H1 (cell line): ENCODE measurements at regions of chr17 and their contacts with region 1.

Region 1: GRCh38 chr17:66392783-66393437 is 90.5 kb downstream of the PRKCA start:
- DNase-seq: no peak
- H3K4me3 ChIP-seq: no peak overlapping the region
- H3K27ac ChIP-seq: no peak overlapping the region
- H3K4me1 ChIP-seq: no peaks in the 10 kb centered on the region; a peak in 1 of 7 replicates
- H3K27me3 ChIP-seq: no peaks in the 10 kb centered on the region
- CTCF ChIP-seq: no peak
- EP300 ChIP-seq: no peak
- POLR2A ChIP-seq: no peak
- RAD21 ChIP-seq: no peak

Region 2: DNA sequence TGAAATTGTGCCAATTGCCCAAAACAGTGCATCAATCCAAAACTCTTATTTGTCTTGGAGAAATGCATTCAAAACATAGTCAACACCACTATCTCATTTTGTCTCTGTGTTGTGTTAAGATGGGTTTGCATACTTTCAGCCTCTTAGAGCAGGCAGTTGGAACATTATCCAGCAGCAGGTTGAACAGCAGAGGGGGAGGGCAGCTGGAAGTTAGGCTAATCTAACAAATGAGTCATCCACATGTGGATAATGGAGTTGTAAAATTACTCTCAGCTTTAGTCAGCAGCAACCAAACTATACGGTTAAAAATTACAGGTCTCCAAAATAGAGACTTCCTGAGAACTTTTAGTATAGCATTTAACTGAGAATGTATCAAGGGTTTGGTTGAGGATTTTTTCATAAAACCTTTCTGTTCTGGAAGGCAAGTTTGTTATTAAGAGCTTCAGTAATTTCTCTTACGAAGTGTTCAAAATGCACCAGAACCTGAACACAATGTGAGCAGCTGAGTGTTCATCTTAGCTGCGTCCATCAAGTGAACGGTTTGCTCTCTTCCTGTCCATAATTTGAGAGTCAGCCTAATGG is 44.2 kb before region 1 on chr17:
- CTCF ChIA-PET with region 1: no interaction called
- POLR2A ChIA-PET with region 1: no interaction called
- DNase-seq: no peak
- H3K4me3 ChIP-seq: no peak overlapping the region
- H3K27ac ChIP-seq: no peak overlapping the region
- H3K4me1 ChIP-seq: peaks cover 0 to 9% (median 4%) of the 10 kb centered on the region in 4 experiments; a peak in 2 of 7 replicates
- H3K27me3 ChIP-seq: no peaks in the 10 kb centered on the region
- CTCF ChIP-seq: no peak
- EP300 ChIP-seq: no peak
- POLR2A ChIP-seq: no peak
- RAD21 ChIP-seq: no peak

Region 3: GRCh38 chr17:66403846-66404556 is 11.1 kb after region 1 on chr17:
- CTCF ChIA-PET with region 1: interaction called, 13 read pairs
- POLR2A ChIA-PET with region 1: interaction called, 4 read pairs
- DNase-seq: no peak
- H3K4me3 ChIP-seq: no peak overlapping the region
- H3K27ac ChIP-seq: no peak overlapping the region
- H3K4me1 ChIP-seq: peaks cover 0 to 7% (median 3%) of the 10 kb centered on the region in 4 experiments; a peak in 3 of 7 replicates
- H3K27me3 ChIP-seq: no peaks in the 10 kb centered on the region
- CTCF ChIP-seq: no peak
- EP300 ChIP-seq: no peak
- POLR2A ChIP-seq: no peak
- RAD21 ChIP-seq: no peak

Region 4: GRCh38 chr17:66441101-66441661 is 48.3 kb after region 1 on chr17:
- CTCF ChIA-PET with region 1: no interaction called
- POLR2A ChIA-PET with region 1: no interaction called
- DNase-seq: no peak
- H3K4me3 ChIP-seq: no peak overlapping the region
- H3K27ac ChIP-seq: no peak overlapping the region
- H3K4me1 ChIP-seq: peaks cover 2 to 5% (median 4%) of the 10 kb centered on the region in 4 experiments; a peak in 3 of 7 replicates
- H3K27me3 ChIP-seq: no peaks in the 10 kb centered on the region
- CTCF ChIP-seq: no peak
- EP300 ChIP-seq: no peak
- POLR2A ChIP-seq: no peak
- RAD21 ChIP-seq: no peak